PC-3 (cell line): ENCODE measurements at regions of chr14 and their contacts with region 1.

Region 1: GRCh38 chr14:35949985-35950384 is 123.8 kb downstream of the BRMS1L start:
- DNase-seq: peak; percentile 61
- ATAC-seq: peak; percentile 53
- H3K4me3 ChIP-seq: no peak overlapping the region
- H3K27ac ChIP-seq: no peak overlapping the region
- H3K4me1 ChIP-seq: peaks cover 17% of the 10 kb centered on the region
- H3K27me3 ChIP-seq: peaks cover 9% of the 10 kb centered on the region
- CTCF ChIP-seq: no peak

Region 2: GRCh38 chr14:35835208-35835982 is 114.6 kb before region 1 on chr14:
- CTCF ChIA-PET with region 1: no interaction called
- POLR2A ChIA-PET with region 1: no interaction called
- intact Hi-C with region 1: no loop called
- DNase-seq: no peak
- ATAC-seq: no peak
- H3K4me3 ChIP-seq: no peak overlapping the region
- H3K27ac ChIP-seq: no peak overlapping the region
- H3K4me1 ChIP-seq: no peaks in the 10 kb centered on the region
- H3K27me3 ChIP-seq: no peaks in the 10 kb centered on the region
- CTCF ChIP-seq: no peak

Region 3: DNA sequence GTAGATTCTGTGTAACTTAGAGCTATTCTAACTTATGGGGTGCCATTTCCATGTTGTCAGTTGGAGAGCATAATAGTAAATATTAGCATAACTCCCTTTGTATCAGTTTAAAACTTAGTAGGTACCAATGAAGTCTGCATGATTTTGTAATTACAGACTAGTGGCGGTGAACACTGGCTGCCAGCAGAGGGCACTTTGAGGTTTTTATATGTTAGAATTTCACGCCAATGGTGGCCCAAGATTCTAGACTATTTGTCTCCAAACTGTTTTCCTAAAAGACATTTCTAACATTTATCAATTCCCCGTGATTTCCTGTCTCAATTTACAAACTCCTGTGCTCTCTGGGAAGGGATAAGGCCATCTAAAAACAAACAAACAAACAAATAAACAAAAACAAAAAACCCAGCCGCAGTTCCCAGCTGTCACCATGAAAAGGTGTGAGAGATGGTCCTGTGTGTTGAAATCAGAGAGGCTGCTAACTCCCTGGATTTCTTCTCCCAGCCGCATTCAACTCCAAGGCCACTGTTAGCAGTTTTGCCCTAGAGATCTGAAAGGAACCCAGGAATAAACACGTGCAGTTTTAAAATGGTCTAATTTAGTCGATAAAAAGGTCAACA is 66.2 kb before region 1 on chr14:
- CTCF ChIA-PET with region 1: interaction called, 4 read pairs
- POLR2A ChIA-PET with region 1: interaction called, 4 read pairs
- intact Hi-C with region 1: loop called (anchors 2 kb)
- DNase-seq: peak; percentile 60
- ATAC-seq: peak; percentile 75
- H3K4me3 ChIP-seq: peak overlapping the region; percentile 41; the same call in 1 of the 2 replicates
- H3K27ac ChIP-seq: no peak overlapping the region
- H3K4me1 ChIP-seq: peaks cover 12% of the 10 kb centered on the region
- H3K27me3 ChIP-seq: no peaks in the 10 kb centered on the region
- CTCF ChIP-seq: peak; percentile 92

Region 4: GRCh38 chr14:36241183-36241582 is 291.2 kb after region 1 on chr14:
- CTCF ChIA-PET with region 1: no interaction called
- POLR2A ChIA-PET with region 1: no interaction called
- intact Hi-C with region 1: no loop called
- DNase-seq: peak; percentile 30
- ATAC-seq: no peak
- H3K4me3 ChIP-seq: no peak overlapping the region
- H3K27ac ChIP-seq: no peak overlapping the region
- H3K4me1 ChIP-seq: peaks cover 18% of the 10 kb centered on the region
- H3K27me3 ChIP-seq: peaks cover 20% of the 10 kb centered on the region; the same call in 1 of the 2 replicates
- CTCF ChIP-seq: peak; percentile 57